ENCODE measurements at regions of chr11 and their contacts with region 1.

Region 1: DNA sequence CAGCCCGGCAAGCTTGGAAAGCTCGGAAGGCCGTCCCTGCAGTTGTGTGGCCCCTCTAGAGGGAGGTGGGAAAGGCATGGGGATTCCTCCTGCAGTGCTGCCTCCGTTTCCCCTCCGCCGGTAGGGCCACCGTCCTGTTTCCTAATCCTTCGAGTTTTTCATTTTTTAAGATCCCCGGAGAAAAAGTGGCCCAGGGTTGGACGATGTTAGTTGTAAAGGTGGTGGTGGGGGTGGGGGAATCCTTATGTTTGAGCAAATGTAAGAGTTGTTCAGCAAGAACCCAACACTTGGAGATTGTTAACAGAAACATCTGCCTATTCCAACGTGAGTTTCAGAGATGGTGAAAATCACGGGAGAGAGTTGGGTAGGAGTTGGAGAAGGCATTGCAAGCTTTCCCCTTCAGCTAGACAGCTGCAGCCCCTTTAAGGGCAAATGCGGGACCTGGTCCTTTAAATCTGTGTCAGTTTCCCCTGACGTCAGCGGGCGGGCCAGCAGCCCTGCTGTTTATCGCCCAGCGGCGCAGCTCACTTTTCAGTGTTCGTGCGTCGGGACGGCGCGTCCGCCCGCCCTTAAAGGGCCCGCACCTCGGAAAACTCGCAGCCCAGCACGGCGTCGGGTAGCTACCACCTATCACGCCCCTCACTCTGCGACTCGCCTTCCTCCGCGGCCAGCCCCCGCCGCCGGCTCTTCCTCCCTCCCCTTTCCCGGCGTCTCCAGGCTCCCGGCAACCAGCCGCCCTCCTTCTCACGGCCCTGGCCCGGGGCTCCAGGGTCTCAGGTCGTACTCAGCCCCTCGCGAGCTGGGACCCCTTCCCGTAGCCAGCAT is at the start of gene SIDT2:
- DNase-seq: peak; percentile 86
- H3K4me3 ChIP-seq: peak within 1 kb of the TSS; percentile 76
- H3K27ac ChIP-seq: peak within 1 kb of the TSS; percentile 65
- H3K27me3 ChIP-seq: no peaks in the 10 kb centered on the region
- CTCF ChIP-seq: no peak
- polyA plus RNA-seq, gene SIDT2: 32.5 and 45.0 TPM in 2 replicates

Region 2: GRCh38 chr11:117143871-117144476 is 34.4 kb before region 1 on chr11 and contains the start of gene PAFAH1B2:
- CTCF ChIA-PET with region 1: interaction called, 5 read pairs
- POLR2A ChIA-PET with region 1: interaction called, 18 read pairs
- DNase-seq: peak; percentile 60
- H3K4me3 ChIP-seq: peak within 1 kb of the TSS; percentile 95
- H3K27ac ChIP-seq: peak within 1 kb of the TSS; percentile 82
- H3K27me3 ChIP-seq: no peaks in the 10 kb centered on the region
- CTCF ChIP-seq: no peak
- polyA plus RNA-seq, gene PAFAH1B2: 46.1 and 48.8 TPM in 2 replicates

Region 3: DNA sequence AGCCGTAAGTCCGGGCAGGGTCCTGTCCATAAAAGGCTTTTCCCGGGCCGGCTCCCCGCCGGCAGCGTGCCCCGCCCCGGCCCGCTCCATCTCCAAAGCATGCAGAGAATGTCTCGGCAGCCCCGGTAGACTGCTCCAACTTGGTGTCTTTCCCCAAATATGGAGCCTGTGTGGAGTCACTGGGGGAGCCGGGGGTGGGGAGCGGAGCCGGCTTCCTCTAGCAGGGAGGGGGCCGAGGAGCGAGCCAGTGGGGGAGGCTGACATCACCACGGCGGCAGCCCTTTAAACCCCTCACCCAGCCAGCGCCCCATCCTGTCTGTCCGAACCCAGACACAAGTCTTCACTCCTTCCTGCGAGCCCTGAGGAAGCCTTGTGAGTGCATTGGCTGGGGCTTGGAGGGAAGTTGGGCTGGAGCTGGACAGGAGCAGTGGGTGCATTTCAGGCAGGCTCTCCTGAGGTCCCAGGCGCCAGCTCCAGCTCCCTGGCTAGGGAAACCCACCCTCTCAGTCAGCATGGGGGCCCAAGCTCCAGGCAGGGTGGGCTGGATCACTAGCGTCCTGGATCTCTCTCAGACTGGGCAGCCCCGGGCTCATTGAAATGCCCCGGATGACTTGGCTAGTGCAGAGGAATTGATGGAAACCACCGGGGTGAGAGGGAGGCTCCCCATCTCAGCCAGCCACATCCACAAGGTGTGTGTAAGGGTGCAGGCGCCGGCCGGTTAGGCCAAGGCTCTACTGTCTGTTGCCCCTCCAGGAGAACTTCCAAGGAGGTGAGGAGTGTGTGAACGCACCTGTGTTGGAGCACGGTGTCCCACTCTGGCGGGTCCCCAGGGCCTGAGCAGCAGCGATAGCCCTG is 20.9 kb after region 1 on chr11 and contains the start of gene TAGLN:
- CTCF ChIA-PET with region 1: interaction called, 6 read pairs
- POLR2A ChIA-PET with region 1: interaction called, 12 read pairs
- DNase-seq: peak; percentile 91
- H3K4me3 ChIP-seq: peak within 1 kb of the TSS; percentile 88
- H3K27ac ChIP-seq: peak within 1 kb of the TSS; percentile 96
- H3K27me3 ChIP-seq: no peaks in the 10 kb centered on the region
- CTCF ChIP-seq: no peak
- polyA plus RNA-seq, gene TAGLN: 3,100 and 3,444 TPM in 2 replicates

Region 4: GRCh38 chr11:117226388-117227385 is 48.3 kb after region 1 on chr11:
- CTCF ChIA-PET with region 1: interaction called, 70 read pairs
- POLR2A ChIA-PET with region 1: interaction called, 5 read pairs
- DNase-seq: no peak
- H3K4me3 ChIP-seq: no peak overlapping the region
- H3K27ac ChIP-seq: peak overlapping the region; percentile 11
- H3K27me3 ChIP-seq: no peaks in the 10 kb centered on the region
- CTCF ChIP-seq: peak; percentile 79

Region 5: GRCh38 chr11:117232092-117232878 is 53.9 kb after region 1 on chr11 and contains the start of gene RNF214:
- CTCF ChIA-PET with region 1: interaction called, 70 read pairs
- POLR2A ChIA-PET with region 1: interaction called, 4 read pairs
- DNase-seq: no peak
- H3K4me3 ChIP-seq: peak within 1 kb of the TSS; percentile 96
- H3K27ac ChIP-seq: peak within 1 kb of the TSS; percentile 86
- H3K27me3 ChIP-seq: no peaks in the 10 kb centered on the region
- CTCF ChIP-seq: peak; percentile 64
- polyA plus RNA-seq, gene RNF214: 15.1 and 15.2 TPM in 2 replicates

Region 6: GRCh38 chr11:118017111-118017510 is 838.7 kb after region 1 on chr11:
- CTCF ChIA-PET with region 1: no interaction called
- POLR2A ChIA-PET with region 1: no interaction called
- DNase-seq: no peak
- H3K4me3 ChIP-seq: no peak overlapping the region
- H3K27ac ChIP-seq: no peak overlapping the region
- H3K27me3 ChIP-seq: peaks cover 2% of the 10 kb centered on the region
- CTCF ChIP-seq: no peak